ENCODE measurements at regions of chr16 and their contacts with region 1.

Region 1: GRCh38 chr16:4293822-4294457 is 21.1 kb upstream of the TFAP4 start:
- DNase-seq: peak; percentile 35
- H3K4me3 ChIP-seq: no peak overlapping the region
- H3K27ac ChIP-seq: no peak overlapping the region
- H3K4me1 ChIP-seq: peaks cover 39% of the 10 kb centered on the region
- H3K27me3 ChIP-seq: no peaks in the 10 kb centered on the region
- CTCF ChIP-seq: no peak

Region 2: DNA sequence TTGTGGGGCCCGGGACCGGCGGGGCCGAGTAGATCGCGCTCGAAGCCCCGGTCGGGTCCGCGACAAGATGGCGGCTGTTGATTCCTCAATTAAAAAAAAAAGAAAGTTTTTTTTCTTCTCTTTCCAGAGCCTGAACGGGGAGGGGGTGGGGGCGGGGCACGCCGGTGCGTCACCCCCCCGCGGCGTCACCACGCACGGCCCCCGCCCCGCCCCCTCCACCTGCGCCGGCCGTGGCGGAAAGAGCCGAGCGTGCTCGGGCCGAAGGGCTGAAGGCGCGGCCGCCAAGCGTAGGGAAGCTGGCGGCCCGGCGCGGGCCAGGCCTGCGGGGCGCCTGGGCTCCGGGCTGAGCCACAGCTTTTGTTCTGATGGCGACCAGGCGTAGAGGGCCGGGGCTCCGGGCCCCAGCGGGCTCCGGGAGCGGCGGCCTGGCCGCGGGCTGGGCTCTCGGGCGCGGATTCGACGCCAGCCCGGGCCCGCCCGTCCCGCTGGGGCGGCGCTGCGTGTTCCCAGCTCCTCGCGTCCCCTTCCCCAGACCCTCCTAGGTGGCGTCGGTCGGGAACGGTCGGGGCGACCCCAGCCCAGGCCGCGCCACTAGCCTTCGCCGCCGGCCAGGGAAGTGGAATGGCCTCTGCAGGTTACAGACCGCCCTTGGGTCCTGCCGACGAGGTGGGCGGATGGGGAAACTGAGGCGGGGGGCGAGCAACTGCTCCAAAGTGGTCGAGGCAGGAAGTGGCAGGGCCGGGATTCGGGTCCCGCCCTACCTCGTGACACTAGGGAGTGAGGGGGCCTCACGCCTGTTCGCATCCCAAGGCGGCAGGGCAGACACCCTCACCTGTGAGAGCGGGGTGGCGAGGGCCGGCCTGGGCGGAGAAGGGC is 413.1 kb before region 1 on chr16 and contains the start of gene CREBBP:
- CTCF ChIA-PET with region 1: no interaction called
- dilution Hi-C with region 1: no loop called
- in situ Hi-C with region 1: no loop called
- intact Hi-C with region 1: no loop called
- DNase-seq: peak; percentile 84
- H3K4me3 ChIP-seq: peak within 1 kb of the TSS; percentile 83 to 97 (median 90)
- H3K27ac ChIP-seq: peak within 1 kb of the TSS; percentile 80
- H3K4me1 ChIP-seq: peaks cover 12% of the 10 kb centered on the region
- H3K27me3 ChIP-seq: no peaks in the 10 kb centered on the region
- CTCF ChIP-seq: no peak
- total RNA-seq, gene CREBBP: 20.2 to 45.0 TPM

Region 3: DNA sequence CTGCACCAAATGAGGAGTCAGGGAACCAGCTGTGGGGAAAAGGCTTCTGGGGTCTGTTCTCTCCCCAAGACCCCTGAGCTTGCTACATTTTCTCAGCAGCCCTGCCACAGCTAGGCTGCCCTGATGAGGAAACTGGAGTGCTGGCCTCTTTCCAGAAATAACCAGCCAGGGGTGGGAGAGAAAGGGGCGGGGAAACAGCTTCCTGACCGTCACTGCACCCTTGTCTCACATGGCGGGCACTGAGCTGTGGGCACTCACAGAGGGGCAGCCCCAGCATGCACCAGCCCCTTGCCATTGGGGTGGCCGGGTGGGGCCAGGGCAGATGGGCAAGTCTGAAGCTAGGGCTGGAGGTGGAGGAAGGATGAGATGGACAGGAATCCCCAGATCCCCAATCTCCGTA is 54.9 kb before region 1 on chr16:
- CTCF ChIA-PET with region 1: no interaction called
- dilution Hi-C with region 1: no loop called
- in situ Hi-C with region 1: no loop called
- intact Hi-C with region 1: no loop called
- DNase-seq: no peak
- H3K4me3 ChIP-seq: no peak overlapping the region
- H3K27ac ChIP-seq: no peak overlapping the region
- H3K4me1 ChIP-seq: no peaks in the 10 kb centered on the region
- H3K27me3 ChIP-seq: peaks cover 2% of the 10 kb centered on the region
- CTCF ChIP-seq: no peak

Region 4: DNA sequence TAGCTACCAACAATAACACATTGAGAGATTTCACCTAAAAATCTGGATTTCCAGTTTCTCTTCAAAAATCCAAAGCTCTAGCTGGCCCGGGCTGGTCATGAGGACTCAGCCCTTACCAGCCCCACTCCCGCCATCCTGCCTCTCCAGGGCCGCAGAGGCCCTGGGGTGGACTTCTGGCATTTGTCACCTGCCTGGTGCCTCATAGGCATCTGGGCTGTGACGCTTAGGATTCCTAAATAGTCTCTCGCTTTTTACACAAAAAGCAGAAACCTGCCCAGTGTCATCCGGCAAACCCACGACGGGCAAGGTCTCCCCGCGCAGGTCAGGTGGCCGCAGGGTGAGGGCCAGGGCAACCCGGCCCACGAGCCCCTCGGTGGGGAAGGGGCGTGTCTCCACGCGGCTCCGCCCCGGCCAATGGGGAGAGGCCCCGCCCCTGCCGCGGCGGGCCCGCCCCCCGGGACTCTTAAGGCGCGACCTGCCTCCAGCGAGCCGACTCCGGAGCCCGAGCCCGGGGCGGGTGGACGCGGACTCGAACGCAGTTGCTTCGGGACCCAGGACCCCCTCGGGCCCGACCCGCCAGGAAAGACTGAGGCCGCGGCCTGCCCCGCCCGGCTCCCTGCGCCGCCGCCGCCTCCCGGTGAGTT is 77.5 kb after region 1 on chr16 and contains the start of gene VASN:
- CTCF ChIA-PET with region 1: no interaction called
- dilution Hi-C with region 1: loop called (anchors 10 kb)
- in situ Hi-C with region 1: no loop called
- intact Hi-C with region 1: no loop called
- DNase-seq: peak; percentile 44
- H3K4me3 ChIP-seq: peak within 1 kb of the TSS; percentile 37 to 54 (median 53)
- H3K27ac ChIP-seq: no peak within 1 kb of the TSS
- H3K4me1 ChIP-seq: peaks cover 75% of the 10 kb centered on the region
- H3K27me3 ChIP-seq: no peaks in the 10 kb centered on the region
- CTCF ChIP-seq: no peak
- total RNA-seq, gene VASN: 5.0 to 25.5 TPM